BJ (cell line): ENCODE measurements at regions of chr19 and their contacts with region 1.

Region 1: DNA sequence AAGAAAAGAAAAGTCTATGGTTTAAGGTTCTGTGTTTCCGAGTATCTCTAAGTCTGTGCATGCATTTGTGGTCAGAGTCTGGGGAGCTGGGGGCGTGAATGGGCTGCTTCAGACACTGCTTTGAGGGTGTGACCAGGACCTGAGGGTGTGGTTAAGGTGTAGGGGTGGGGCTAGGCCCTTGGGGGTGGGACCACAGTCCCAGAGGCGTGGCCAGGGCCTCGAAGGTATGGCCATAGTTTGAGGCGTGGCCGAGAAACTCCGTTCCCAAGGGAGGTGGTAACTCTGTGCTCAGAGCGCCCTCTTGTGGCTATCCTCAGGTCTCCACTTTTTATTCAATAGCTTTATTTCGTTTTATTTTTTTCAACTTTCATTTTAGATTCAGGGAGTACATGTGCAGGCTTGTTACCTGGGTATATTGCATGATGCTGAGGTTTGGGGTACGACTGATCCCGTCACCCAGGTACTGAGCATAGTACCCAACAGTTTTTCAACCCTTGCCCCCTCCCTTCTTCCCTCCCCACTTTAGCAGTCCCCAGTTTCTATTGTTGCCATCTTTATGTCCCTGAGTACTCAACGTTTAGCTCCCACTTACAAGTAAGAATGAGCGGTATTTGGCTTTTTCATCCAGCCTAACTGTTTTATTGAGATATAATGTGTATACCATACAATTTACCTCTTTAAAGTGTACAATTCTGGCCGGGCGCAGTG is 7.0 kb upstream of the CBLC start:
- DNase-seq: peak; percentile 44
- H3K4me3 ChIP-seq: no peak overlapping the region
- H3K27me3 ChIP-seq: no peaks in the 10 kb centered on the region
- CTCF ChIP-seq: peak; percentile 72

Region 2: GRCh38 chr19:44741841-44742352 is 28.8 kb before region 1 on chr19:
- CTCF ChIA-PET with region 1: interaction called, 12 read pairs
- POLR2A ChIA-PET with region 1: no interaction called
- DNase-seq: peak; percentile 98
- H3K4me3 ChIP-seq: no peak overlapping the region
- H3K27me3 ChIP-seq: no peaks in the 10 kb centered on the region
- CTCF ChIP-seq: no peak

Region 3: GRCh38 chr19:44746946-44747738 is 23.6 kb before region 1 on chr19:
- CTCF ChIA-PET with region 1: interaction called, 12 read pairs
- POLR2A ChIA-PET with region 1: no interaction called
- DNase-seq: peak; percentile 84
- H3K4me3 ChIP-seq: peak overlapping the region; percentile 73
- H3K27me3 ChIP-seq: no peaks in the 10 kb centered on the region
- CTCF ChIP-seq: no peak

Region 4: GRCh38 chr19:44752816-44753618 is 17.7 kb before region 1 on chr19:
- CTCF ChIA-PET with region 1: interaction called, 33 read pairs
- POLR2A ChIA-PET with region 1: no interaction called
- DNase-seq: peak; percentile 78
- H3K4me3 ChIP-seq: peak overlapping the region; percentile 44
- H3K27me3 ChIP-seq: no peaks in the 10 kb centered on the region
- CTCF ChIP-seq: peak; percentile 11; the same call in 1 of the 2 replicates